Pancreas (tissue), 10 donors: ENCODE measurements at regions of chr16 and their contacts with region 1.

Region 1: GRCh38 chr16:82043680-82044584 is 8.9 kb downstream of the HSD17B2 start:
- DNase-seq: no peak
- ATAC-seq: peak in 1 of 4 donors; percentile 51
- H3K4me3 ChIP-seq: no peak overlapping the region
- H3K27ac ChIP-seq: no peak overlapping the region
- H3K4me1 ChIP-seq: peaks cover 0 to 4% (median 0%) of the 10 kb centered on the region in 3 donors
- H3K27me3 ChIP-seq: no peaks in the 10 kb centered on the region
- CTCF ChIP-seq: no peak

Region 2: GRCh38 chr16:82219298-82219697 is 175.4 kb after region 1 on chr16:
- intact Hi-C with region 1: loop called in 1 of 3 experiments (anchors 10 kb)
- DNase-seq: no peak
- ATAC-seq: no peak
- H3K4me3 ChIP-seq: no peak overlapping the region
- H3K27ac ChIP-seq: no peak overlapping the region
- H3K4me1 ChIP-seq: no peaks in the 10 kb centered on the region
- H3K27me3 ChIP-seq: no peaks in the 10 kb centered on the region
- CTCF ChIP-seq: no peak

Region 3: DNA sequence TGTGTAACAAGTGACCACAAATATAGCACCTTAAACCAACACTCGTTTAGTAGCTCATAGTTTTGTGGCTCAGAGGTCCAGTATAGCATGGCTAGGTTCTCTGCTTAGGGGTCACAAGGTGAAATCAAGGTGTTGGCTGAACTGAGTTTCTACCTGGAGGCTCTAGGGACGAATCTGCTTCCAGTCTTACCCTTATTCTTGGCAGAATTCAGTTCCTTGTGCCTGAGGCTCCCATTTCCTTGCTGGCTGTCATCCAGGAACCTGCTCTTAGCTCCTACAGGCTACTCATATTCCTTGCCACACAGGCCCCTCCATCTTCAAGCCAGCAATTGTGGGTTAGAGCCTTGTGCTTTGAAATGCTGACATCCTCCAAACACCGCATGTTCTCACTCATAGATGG is 370.5 kb after region 1 on chr16:
- intact Hi-C with region 1: no loop called
- DNase-seq: no peak
- ATAC-seq: no peak
- H3K4me3 ChIP-seq: no peak overlapping the region
- H3K27ac ChIP-seq: no peak overlapping the region
- H3K4me1 ChIP-seq: no peaks in the 10 kb centered on the region
- H3K27me3 ChIP-seq: no peaks in the 10 kb centered on the region
- CTCF ChIP-seq: no peak